ENCODE measurements at regions of chr11 and their contacts with region 1.

Region 1: DNA sequence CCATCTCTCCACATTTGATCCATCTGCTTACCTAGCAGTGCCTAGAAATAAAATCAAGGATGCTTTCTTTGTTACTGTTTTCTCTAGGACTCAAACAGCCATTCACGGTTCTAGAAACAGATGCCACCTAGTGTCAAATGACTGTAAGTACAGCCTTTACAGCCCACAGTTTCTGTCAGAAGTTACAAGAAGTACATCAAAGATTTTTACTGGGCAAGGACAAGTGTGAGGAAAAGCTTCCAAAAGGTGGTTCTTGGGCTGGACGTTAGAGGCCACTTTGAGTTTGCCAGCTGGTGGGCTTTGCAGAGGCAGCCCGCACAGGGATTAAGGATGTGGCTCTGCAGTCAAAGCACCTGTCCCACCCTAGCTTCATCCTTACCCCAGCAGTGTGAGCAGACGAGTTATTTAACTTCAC is 6.9 kb downstream of the KMT5B start:
- DNase-seq: peak; percentile 62
- ATAC-seq: peak; percentile 61
- H3K4me3 ChIP-seq: no peak overlapping the region
- H3K27ac ChIP-seq: no peak overlapping the region
- H3K4me1 ChIP-seq: peaks cover 45% of the 10 kb centered on the region
- H3K27me3 ChIP-seq: no peaks in the 10 kb centered on the region
- CTCF ChIP-seq: peak; percentile 90

Region 2: GRCh38 chr11:68106165-68106957 is 99.8 kb before region 1 on chr11:
- CTCF ChIA-PET with region 1: no interaction called
- POLR2A ChIA-PET with region 1: interaction called, 4 read pairs
- in situ Hi-C with region 1: no loop called
- intact Hi-C with region 1: loop called (anchors 5 kb)
- DNase-seq: no peak
- ATAC-seq: peak; percentile 88
- H3K4me3 ChIP-seq: no peak overlapping the region
- H3K27ac ChIP-seq: peak overlapping the region; percentile 10; the same call in 1 of the 2 replicates
- H3K4me1 ChIP-seq: peaks cover 27% of the 10 kb centered on the region
- H3K27me3 ChIP-seq: no peaks in the 10 kb centered on the region
- CTCF ChIP-seq: no peak

Region 3: GRCh38 chr11:68651208-68651984 is 445.2 kb after region 1 on chr11:
- CTCF ChIA-PET with region 1: no interaction called
- POLR2A ChIA-PET with region 1: no interaction called
- in situ Hi-C with region 1: no loop called
- intact Hi-C with region 1: no loop called
- DNase-seq: no peak
- ATAC-seq: peak; percentile 40; the same call in 1 of the 2 replicates
- H3K4me3 ChIP-seq: no peak overlapping the region
- H3K27ac ChIP-seq: no peak overlapping the region
- H3K4me1 ChIP-seq: 0 out of 2 replicates have a peak, but pooled peaks cover 4% of the 10 kb centered on the region
- H3K27me3 ChIP-seq: peaks cover 4% of the 10 kb centered on the region; the same call in 1 of the 2 replicates
- CTCF ChIP-seq: no peak

Measured in Panc1 (cell line).